HCT116 (cell line): ENCODE measurements at regions of chr4 and their contacts with region 1.

Region 1: DNA sequence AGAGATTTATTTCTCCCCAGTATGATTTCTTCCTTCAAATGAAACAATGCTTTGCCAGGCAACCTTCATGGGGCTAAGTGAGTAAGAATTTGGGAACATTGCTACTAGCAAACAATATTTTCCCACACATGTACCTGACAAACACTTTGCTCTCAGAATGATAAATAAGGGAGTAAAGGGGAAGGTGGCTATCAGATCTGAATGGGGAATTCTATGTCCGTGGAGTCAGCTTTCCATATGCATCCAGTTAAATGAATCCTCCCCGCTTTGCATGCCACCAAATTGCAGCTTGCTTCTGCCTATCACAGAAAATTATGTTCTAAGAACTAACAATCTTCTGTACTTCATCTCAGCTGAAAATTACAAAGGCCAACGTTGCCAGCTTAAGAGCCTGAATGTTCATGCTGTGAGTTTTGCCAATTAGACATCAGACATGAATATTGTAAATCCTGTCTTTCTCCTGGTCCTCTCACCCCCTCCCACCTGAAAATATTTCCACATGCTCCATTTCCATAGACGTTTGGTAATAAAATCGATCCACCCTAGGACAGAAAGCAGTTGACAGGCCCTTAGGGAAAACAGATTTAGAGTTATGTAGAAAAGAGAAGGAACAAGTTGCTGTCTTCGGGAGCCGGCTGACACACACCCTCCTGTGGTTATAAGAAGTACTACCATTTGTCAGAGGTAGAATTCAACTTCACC is 6.3 kb downstream of the MEPE start:
- DNase-seq: no peak
- ATAC-seq: peak; percentile 67
- H3K4me3 ChIP-seq: no peak overlapping the region
- H3K27ac ChIP-seq: no peak overlapping the region
- H3K4me1 ChIP-seq: 0 out of 4 replicates have a peak, but pooled peaks cover 2 to 4% of the 10 kb centered on the region in 2 experiments
- H3K27me3 ChIP-seq: no peaks in the 10 kb centered on the region
- CTCF ChIP-seq: peak; percentile 63 to 73 (median 67); a peak in 5 of 6 replicates
- POLR2A ChIP-seq: no peak
- RAD21 ChIP-seq: peak; percentile 78

Region 2: GRCh38 chr4:87270144-87270543 is 568.9 kb before region 1 on chr4:
- CTCF ChIA-PET with region 1: interaction called, 4 read pairs
- POLR2A ChIA-PET with region 1: no interaction called
- RAD21 ChIA-PET with region 1: no interaction called
- intact Hi-C with region 1: loop called (anchors 5 kb)
- DNase-seq: peak; percentile 39
- ATAC-seq: peak; percentile 88
- H3K4me3 ChIP-seq: no peak overlapping the region
- H3K27ac ChIP-seq: no peak overlapping the region
- H3K4me1 ChIP-seq: no peaks in the 10 kb centered on the region
- H3K27me3 ChIP-seq: no peaks in the 10 kb centered on the region
- CTCF ChIP-seq: peak; percentile 63 to 65 (median 64); a peak in 5 of 6 replicates
- POLR2A ChIP-seq: no peak
- RAD21 ChIP-seq: peak; percentile 76

Region 3: GRCh38 chr4:87353592-87353991 is 485.4 kb before region 1 on chr4:
- CTCF ChIA-PET with region 1: no interaction called
- POLR2A ChIA-PET with region 1: no interaction called
- RAD21 ChIA-PET with region 1: no interaction called
- intact Hi-C with region 1: loop called (anchors 5 kb)
- DNase-seq: peak; percentile 7
- ATAC-seq: peak; percentile 66
- H3K4me3 ChIP-seq: no peak overlapping the region
- H3K27ac ChIP-seq: no peak overlapping the region
- H3K4me1 ChIP-seq: no peaks in the 10 kb centered on the region
- H3K27me3 ChIP-seq: no peaks in the 10 kb centered on the region
- CTCF ChIP-seq: peak; percentile 50 to 72 (median 56); a peak in 5 of 6 replicates
- POLR2A ChIP-seq: no peak
- RAD21 ChIP-seq: peak; percentile 66

Region 4: DNA sequence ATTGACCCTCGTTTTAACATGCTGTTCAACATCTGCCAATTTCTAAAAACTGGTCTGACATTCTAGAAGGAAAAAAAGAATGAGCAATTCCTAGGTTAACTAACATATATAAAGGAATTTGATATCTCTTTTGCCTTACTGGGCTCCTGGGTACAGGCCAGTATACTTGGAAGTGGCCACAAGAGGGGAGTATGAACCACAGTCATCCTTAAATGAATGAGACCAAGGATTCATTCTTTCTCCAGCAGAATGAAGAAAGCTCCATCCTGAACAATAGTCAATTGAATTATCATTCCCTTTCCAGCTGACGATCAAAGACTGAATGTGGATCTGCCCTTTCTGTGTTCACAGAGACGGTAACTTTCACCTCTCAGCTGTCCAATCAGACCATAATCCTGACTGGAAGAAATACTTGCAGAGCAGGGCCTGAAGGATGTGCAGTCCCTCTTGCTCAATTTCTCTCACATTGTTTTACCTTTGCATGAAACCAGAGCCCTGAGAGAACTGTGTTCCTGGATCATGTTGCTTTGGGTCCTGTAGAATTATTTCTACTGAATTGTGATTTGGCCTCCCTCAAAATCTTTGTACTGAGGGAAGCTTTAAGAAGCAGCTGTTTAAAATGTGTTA is 295.1 kb before region 1 on chr4:
- CTCF ChIA-PET with region 1: interaction called, 60 read pairs
- POLR2A ChIA-PET with region 1: no interaction called
- RAD21 ChIA-PET with region 1: interaction called in 1 of 2 experiments, 5 read pairs
- intact Hi-C with region 1: loop called (anchors 1 kb)
- DNase-seq: peak; percentile 38
- ATAC-seq: peak; percentile 97
- H3K4me3 ChIP-seq: no peak overlapping the region
- H3K27ac ChIP-seq: no peak overlapping the region
- H3K4me1 ChIP-seq: no peaks in the 10 kb centered on the region
- H3K27me3 ChIP-seq: 0 out of 2 replicates have a peak, but pooled peaks cover 3% of the 10 kb centered on the region
- CTCF ChIP-seq: peak; percentile 65 to 71 (median 69)
- POLR2A ChIP-seq: no peak
- RAD21 ChIP-seq: peak; percentile 74

Region 5: DNA sequence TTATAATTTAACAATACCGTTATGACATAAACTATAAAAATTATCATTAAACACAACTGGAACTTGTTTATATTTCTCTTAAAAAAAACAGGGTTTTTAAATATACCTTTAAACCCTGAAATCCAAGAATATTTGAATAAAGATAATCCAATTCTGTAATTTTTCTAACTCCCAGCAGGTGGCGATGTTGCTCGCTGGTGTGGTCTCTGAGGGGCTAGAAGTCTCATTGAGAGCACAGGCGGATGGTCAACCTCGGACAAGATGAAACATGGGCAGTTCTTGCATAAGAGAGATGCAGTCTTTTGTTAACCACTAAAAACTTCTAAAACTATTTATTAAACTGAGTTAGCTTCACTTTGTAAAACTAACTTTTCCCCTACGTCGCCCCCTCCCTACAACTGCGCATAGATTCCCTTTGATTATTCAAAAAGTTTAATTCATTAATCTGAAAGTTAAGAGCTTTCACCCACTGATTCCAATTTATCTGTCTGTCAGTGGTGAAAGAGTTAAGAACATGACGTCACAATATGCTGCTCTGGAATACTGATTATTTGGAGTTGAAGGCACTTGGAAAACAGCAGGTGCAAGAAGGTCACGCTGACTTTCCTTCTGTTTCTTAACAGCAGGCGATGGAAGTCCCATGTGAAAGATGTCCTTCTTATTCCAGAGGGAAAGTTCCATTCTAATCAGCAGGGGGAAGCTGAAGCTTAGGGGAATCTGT is 159.4 kb before region 1 on chr4:
- CTCF ChIA-PET with region 1: interaction called, 24 read pairs
- POLR2A ChIA-PET with region 1: no interaction called
- RAD21 ChIA-PET with region 1: no interaction called
- intact Hi-C with region 1: loop called (anchors 1 kb)
- DNase-seq: peak; percentile 48
- ATAC-seq: peak; percentile 72
- H3K4me3 ChIP-seq: no peak overlapping the region
- H3K27ac ChIP-seq: no peak overlapping the region
- H3K4me1 ChIP-seq: no peaks in the 10 kb centered on the region
- H3K27me3 ChIP-seq: no peaks in the 10 kb centered on the region
- CTCF ChIP-seq: peak; percentile 67 to 94 (median 84)
- POLR2A ChIP-seq: no peak
- RAD21 ChIP-seq: peak; percentile 89